ENCODE measurements at regions of chr3 and their contacts with region 1.

Region 1: GRCh38 chr3:138186803-138187295 is 252 bp upstream of the ARMC8 start:
- DNase-seq: peak; percentile 96
- H3K4me3 ChIP-seq: peak overlapping the region; percentile 73 to 94 (median 87)
- H3K27ac ChIP-seq: peak overlapping the region; percentile 95 to 99 (median 97)
- H3K4me1 ChIP-seq: peaks cover 0 to 30% (median 26%) of the 10 kb centered on the region in 4 donors
- H3K27me3 ChIP-seq: no peaks in the 10 kb centered on the region
- CTCF ChIP-seq: no peak
- EP300 ChIP-seq: no peak
- POLR2A ChIP-seq: no peak

Region 2: GRCh38 chr3:138174421-138175122 is 12.3 kb before region 1 on chr3 and contains the start of gene DBR1:
- intact Hi-C with region 1: loop called (anchors 2 kb)
- DNase-seq: peak; percentile 88
- H3K4me3 ChIP-seq: peak within 1 kb of the TSS; percentile 76 to 84 (median 80)
- H3K27ac ChIP-seq: peak within 1 kb of the TSS; percentile 79 to 89 (median 84)
- H3K4me1 ChIP-seq: peaks cover 0 to 28% (median 14%) of the 10 kb centered on the region in 4 donors
- H3K27me3 ChIP-seq: no peaks in the 10 kb centered on the region
- CTCF ChIP-seq: no peak
- EP300 ChIP-seq: no peak
- POLR2A ChIP-seq: peak; percentile 53 to 63
- total RNA-seq, gene DBR1: 9.6 to 15.1 (median 11.1) TPM

Region 3: DNA sequence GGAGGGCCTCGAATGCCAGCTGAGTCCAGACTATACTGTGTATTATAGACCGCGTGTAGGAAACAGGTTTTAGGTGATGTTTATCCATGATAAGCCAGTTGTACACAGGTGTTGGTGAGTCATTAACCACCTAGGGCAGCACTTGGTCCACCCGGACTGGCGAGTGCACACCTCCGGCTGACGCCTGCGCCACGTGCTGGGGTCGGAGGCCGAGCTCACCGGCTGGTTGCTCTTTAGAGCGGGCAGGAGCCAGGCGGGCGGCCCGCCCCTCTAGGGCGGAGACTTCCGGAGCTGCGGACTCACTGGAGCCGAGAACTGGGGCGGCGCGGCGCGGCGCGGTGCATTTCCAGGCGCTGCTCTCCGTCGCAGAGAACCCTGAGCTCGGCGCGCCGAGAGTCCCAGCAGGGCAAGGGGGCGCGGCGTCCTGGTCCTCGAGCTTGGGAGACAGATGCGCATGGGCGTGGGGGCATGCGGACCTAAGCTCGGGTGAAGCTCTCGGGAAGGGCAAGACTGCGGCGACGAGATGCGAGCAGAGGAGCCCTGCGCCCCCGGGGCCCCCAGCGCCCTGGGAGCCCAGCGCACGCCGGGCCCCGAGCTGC is 247.5 kb after region 1 on chr3 and contains the start of gene ESYT3:
- intact Hi-C with region 1: loop called (anchors 10 kb)
- DNase-seq: peak; percentile 85
- H3K4me3 ChIP-seq: peak within 1 kb of the TSS; percentile 46 to 68 (median 63)
- H3K27ac ChIP-seq: peak within 1 kb of the TSS in 3 of 4 donors; percentile 68 to 78 (median 72)
- H3K4me1 ChIP-seq: peaks cover 0 to 29% (median 23%) of the 10 kb centered on the region in 4 donors
- H3K27me3 ChIP-seq: peaks cover 0 to 7% (median 0%) of the 10 kb centered on the region in 3 donors
- CTCF ChIP-seq: no peak
- EP300 ChIP-seq: no peak
- POLR2A ChIP-seq: peak in 1 of 2 donors; percentile 32
- total RNA-seq, gene ESYT3: 15.1 to 19.4 (median 17.2) TPM

Measured in sigmoid colon (tissue), 7 donors.